ENCODE measurements at regions of chr15 and their contacts with region 1.

Region 1: DNA sequence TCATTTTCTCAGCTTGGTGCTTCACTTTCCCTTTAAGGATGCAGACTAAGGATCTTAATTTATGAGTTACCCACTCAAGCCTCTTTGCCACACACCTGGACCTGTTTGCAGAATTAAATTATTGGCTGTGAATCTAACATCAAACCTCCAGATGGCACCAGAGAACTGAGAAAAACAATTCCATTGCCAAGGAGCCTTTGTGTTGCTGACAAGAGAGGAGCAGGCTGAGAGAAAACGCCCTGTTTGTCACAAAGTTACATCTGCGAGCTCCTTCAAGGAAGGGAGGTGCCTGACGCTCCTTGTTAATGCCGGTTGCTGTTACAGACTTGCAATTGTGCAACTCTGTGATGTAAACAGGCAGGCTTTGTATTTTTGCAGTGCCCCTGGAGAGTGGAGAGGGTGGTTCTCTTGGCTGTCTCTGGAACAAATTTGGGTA is 36.3 kb upstream of the TMC3 start:
- DNase-seq: peak; percentile 34
- H3K4me3 ChIP-seq: no peak overlapping the region
- H3K27ac ChIP-seq: no peak overlapping the region
- H3K4me1 ChIP-seq: no peaks in the 10 kb centered on the region
- H3K27me3 ChIP-seq: no peaks in the 10 kb centered on the region
- CTCF ChIP-seq: peak; percentile 31

Region 2: GRCh38 chr15:81473177-81473576 is 62.8 kb after region 1 on chr15:
- intact Hi-C with region 1: loop called (anchors 10 kb)
- DNase-seq: no peak
- H3K4me3 ChIP-seq: no peak overlapping the region
- H3K27ac ChIP-seq: no peak overlapping the region
- H3K4me1 ChIP-seq: no peaks in the 10 kb centered on the region
- H3K27me3 ChIP-seq: no peaks in the 10 kb centered on the region
- CTCF ChIP-seq: no peak

Measured in colonic mucosa (tissue), 4 donors.